ENCODE measurements at regions of chr11 and their contacts with region 1.

Region 1: GRCh38 chr11:64269380-64270234 is 14.9 kb downstream of the BAD start:
- DNase-seq: peak; percentile 89 to 98 (median 98)
- ATAC-seq: peak; percentile 82
- H3K4me3 ChIP-seq: peak overlapping the region; percentile 91
- H3K4me3 Mint-ChIP-seq: peak overlapping the region; percentile 95 to 100 (median 98)
- H3K27ac ChIP-seq: peak overlapping the region; percentile 95
- H3K27ac Mint-ChIP-seq: peak overlapping the region; percentile 94 to 99 (median 99)
- H3K4me1 ChIP-seq: peaks cover 8 to 10% of the 10 kb centered on the region in 2 donors
- H3K4me1 Mint-ChIP-seq: peaks cover 8 to 29% (median 24%) of the 10 kb centered on the region in 7 donors
- H3K27me3 ChIP-seq: no peaks in the 10 kb centered on the region
- H3K27me3 Mint-ChIP-seq: no peaks in the 10 kb centered on the region

Region 2: GRCh38 chr11:64185816-64186498 is 83.7 kb before region 1 on chr11 and contains the start of gene STIP1:
- CTCF ChIA-PET with region 1: no interaction called
- POLR2A ChIA-PET with region 1: interaction called, 7 read pairs
- intact Hi-C with region 1: loop called (anchors 1 kb)
- DNase-seq: peak; percentile 87 to 100 (median 99)
- ATAC-seq: peak; percentile 92
- H3K4me3 ChIP-seq: peak within 1 kb of the TSS; percentile 84
- H3K4me3 Mint-ChIP-seq: peak within 1 kb of the TSS in 9 of 10 donors; percentile 88 to 99 (median 96)
- H3K27ac ChIP-seq: peak within 1 kb of the TSS; percentile 82
- H3K27ac Mint-ChIP-seq: peak within 1 kb of the TSS in 7 of 9 donors; percentile 89 to 99 (median 92)
- H3K4me1 ChIP-seq: peaks cover 11 to 28% of the 10 kb centered on the region in 2 donors
- H3K4me1 Mint-ChIP-seq: peaks cover 19 to 58% (median 46%) of the 10 kb centered on the region in 7 donors
- H3K27me3 ChIP-seq: no peaks in the 10 kb centered on the region
- H3K27me3 Mint-ChIP-seq: peaks cover 0 to 6% (median 0%) of the 10 kb centered on the region in 5 donors
- total RNA-seq, gene STIP1: 45.1 to 243 (median 88.8) TPM

Region 3: DNA sequence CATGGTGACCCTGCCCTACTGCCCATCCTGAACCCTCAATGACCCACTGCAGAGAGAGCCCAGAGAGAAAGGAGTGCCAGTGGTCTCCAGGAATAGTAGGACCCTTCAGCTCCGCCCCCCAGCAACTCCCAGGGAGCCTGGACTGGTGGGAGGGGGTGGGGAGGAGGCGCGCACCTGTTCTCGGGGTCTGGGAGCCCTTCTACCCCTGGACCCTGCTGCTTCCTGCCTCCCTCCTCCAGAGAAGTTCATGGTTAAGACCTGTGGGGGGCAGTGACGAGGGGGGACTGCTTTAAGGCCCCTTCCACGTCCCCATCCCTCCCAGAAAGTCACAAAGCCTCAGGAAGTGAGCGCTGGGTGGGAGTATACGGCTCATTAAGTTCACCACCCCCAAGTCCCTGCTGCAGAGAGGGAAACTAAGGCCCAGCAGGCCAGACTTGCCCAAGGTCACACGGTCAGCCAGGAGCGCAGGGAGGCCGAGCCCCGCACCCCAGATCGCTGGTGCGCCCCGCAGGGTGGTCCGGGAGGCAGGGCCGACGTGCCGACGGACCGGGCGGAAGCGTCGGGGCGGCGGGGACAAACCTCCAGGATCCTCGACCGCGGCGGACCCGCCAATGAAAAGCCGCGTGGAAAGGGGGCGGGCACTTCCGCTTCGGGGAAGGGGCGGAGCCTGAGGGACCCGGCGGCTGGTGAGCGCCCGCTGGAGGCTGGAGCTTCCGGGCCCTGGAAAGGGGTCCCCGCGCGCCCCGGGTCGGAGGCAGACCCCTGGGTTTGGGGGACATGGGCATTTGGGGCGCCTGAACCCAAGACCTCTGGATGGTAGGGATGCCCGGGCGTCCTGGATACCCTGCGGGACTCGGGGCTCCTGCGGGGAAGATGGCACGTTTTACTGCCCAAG is 43.7 kb before region 1 on chr11 and contains the starts of genes NUDT22 and TRPT1:
- CTCF ChIA-PET with region 1: no interaction called
- POLR2A ChIA-PET with region 1: interaction called, 16 read pairs
- intact Hi-C with region 1: loop called (anchors 1 kb)
- DNase-seq: peak; percentile 81 to 97 (median 86)
- ATAC-seq: peak; percentile 82
- H3K4me3 ChIP-seq: peak within 1 kb of the TSS; percentile 60
- H3K4me3 Mint-ChIP-seq: peak within 1 kb of the TSS; percentile 87 to 96 (median 92)
- H3K27ac ChIP-seq: peak within 1 kb of the TSS; percentile 89
- H3K27ac Mint-ChIP-seq: peak within 1 kb of the TSS; percentile 76 to 97 (median 90)
- H3K4me1 ChIP-seq: peaks cover 28 to 34% of the 10 kb centered on the region in 2 donors
- H3K4me1 Mint-ChIP-seq: peaks cover 15 to 46% (median 34%) of the 10 kb centered on the region in 7 donors
- H3K27me3 ChIP-seq: no peaks in the 10 kb centered on the region
- H3K27me3 Mint-ChIP-seq: no peaks in the 10 kb centered on the region
- total RNA-seq, gene NUDT22: 47.8 to 94.0 (median 78.3) TPM
- total RNA-seq, gene TRPT1: 24.0 to 53.0 (median 27.2) TPM

Region 4: GRCh38 chr11:64240394-64241174 is 29.0 kb before region 1 on chr11 and contains the start of gene FKBP2:
- CTCF ChIA-PET with region 1: interaction called, 4 read pairs
- POLR2A ChIA-PET with region 1: interaction called, 154 read pairs
- intact Hi-C with region 1: loop called (anchors 1 to 2 kb)
- DNase-seq: peak; percentile 97 to 99 (median 98)
- ATAC-seq: peak; percentile 78
- H3K4me3 ChIP-seq: peak within 1 kb of the TSS; percentile 73
- H3K4me3 Mint-ChIP-seq: peak within 1 kb of the TSS; percentile 80 to 95 (median 89)
- H3K27ac ChIP-seq: peak within 1 kb of the TSS; percentile 99
- H3K27ac Mint-ChIP-seq: peak within 1 kb of the TSS; percentile 97 to 100 (median 99)
- H3K4me1 ChIP-seq: peaks cover 24 to 28% of the 10 kb centered on the region in 2 donors
- H3K4me1 Mint-ChIP-seq: peaks cover 9 to 46% (median 31%) of the 10 kb centered on the region in 7 donors
- H3K27me3 ChIP-seq: no peaks in the 10 kb centered on the region
- H3K27me3 Mint-ChIP-seq: no peaks in the 10 kb centered on the region
- total RNA-seq, gene FKBP2: 20.3 to 46.6 (median 33.5) TPM

Region 5: DNA sequence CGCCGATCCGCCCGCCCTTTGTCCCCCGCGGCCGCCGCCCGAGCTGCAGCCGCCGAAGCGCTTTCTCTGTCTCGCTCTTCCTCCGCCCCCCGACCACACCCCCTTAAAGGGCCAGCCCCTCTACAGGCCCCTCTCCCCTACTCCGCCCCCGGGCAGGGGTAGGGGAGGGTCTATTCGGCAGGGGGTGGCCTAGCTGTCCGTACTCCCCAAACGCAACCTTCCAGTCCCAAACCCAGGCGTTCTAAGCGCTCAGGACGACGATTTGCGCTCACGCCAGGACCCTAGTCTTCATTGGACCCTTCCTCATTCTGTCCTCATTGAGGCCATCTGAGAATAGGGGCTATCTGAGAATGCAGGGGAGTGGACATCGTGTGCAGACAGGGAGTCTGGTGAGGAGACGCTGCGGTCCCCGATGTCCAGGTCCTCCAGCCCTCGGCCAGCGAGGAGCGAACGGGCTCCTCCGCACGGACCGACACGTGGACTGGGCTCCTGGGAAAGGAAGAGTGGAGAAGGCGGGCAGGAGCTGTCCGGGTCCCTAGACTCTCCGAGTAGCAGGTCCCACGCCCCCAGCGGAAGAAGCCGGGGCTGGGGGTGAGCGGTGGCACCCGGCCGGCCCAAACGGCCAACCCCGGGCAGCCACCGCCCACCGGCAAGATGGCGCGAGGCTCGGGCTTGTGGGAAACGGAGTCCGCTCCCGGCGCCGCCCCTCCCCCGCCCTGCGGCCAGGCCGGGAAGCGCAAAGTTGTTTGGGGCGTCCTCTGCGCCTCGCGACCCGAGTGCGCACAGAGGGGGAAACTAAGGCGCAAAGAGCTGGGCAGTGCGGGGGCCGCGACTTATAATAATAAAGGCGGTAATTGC is 22.5 kb before region 1 on chr11 and contains the start of gene PPP1R14B:
- CTCF ChIA-PET with region 1: interaction called, 8 read pairs
- POLR2A ChIA-PET with region 1: interaction called, 154 read pairs
- intact Hi-C with region 1: loop called (anchors 1 kb)
- DNase-seq: peak; percentile 55 to 88 (median 70)
- ATAC-seq: peak; percentile 75
- H3K4me3 ChIP-seq: peak within 1 kb of the TSS; percentile 100
- H3K4me3 Mint-ChIP-seq: peak within 1 kb of the TSS; percentile 83 to 93 (median 88)
- H3K27ac ChIP-seq: peak within 1 kb of the TSS; percentile 64
- H3K27ac Mint-ChIP-seq: peak within 1 kb of the TSS; percentile 65 to 88 (median 85)
- H3K4me1 ChIP-seq: peaks cover 25 to 27% of the 10 kb centered on the region in 2 donors
- H3K4me1 Mint-ChIP-seq: peaks cover 7 to 46% (median 32%) of the 10 kb centered on the region in 7 donors
- H3K27me3 ChIP-seq: no peaks in the 10 kb centered on the region
- H3K27me3 Mint-ChIP-seq: peaks cover 0 to 3% (median 0%) of the 10 kb centered on the region in 5 donors
- total RNA-seq, gene PPP1R14B: 20.1 to 116 (median 26.0) TPM

Region 6: DNA sequence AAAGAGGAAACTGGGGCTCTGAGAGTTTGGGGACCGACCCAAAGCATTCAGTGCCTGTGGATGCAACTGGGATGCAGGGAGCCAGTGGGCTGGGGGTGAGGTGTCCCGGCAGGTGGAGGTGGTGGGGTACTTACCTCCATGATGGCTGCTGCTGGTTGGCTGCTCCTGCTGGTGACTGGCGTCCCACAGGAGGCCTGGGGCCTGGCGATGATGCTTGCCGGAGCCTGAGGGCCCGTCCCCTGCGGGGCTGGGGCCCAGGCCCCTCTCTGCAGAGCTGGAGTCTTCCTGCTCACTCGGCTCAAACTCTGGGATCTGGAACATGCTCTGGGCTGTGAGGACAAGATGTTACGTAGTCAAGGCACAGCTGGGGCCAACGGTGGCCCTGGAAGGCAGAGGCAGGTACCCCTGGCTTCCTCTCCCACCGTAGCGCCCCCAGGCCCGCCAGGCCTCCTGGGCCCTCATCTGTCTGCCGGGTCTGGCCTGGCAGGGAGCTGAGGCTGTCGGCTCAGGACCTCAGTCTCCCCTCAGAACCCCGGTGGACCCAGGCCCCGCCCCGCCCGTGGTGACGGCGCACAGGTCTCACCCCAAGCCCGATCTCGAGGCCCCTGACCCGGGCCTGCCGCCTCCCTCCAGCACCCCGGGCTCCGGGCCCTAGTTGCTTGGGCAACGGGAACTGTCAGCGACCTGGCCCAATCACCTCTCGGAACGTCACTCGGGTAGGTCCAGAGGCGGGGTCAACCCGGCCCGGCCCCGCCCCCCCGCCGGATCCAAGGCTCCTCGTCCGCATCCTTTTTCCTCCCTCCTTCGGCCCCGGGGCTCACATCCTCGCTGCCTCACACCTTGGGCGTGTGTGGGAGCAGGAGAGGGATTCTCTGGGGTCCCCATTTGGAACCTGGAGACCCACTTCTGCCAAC is 14.7 kb after region 1 on chr11 and contains the start of gene BAD:
- CTCF ChIA-PET with region 1: interaction called, 15 read pairs
- POLR2A ChIA-PET with region 1: interaction called, 104 read pairs
- intact Hi-C with region 1: loop called (anchors 1 kb)
- DNase-seq: peak; percentile 77 to 92 (median 87)
- ATAC-seq: peak; percentile 87
- H3K4me3 ChIP-seq: peak within 1 kb of the TSS; percentile 100
- H3K4me3 Mint-ChIP-seq: peak within 1 kb of the TSS; percentile 84 to 93 (median 89)
- H3K27ac ChIP-seq: peak within 1 kb of the TSS; percentile 99
- H3K27ac Mint-ChIP-seq: peak within 1 kb of the TSS; percentile 81 to 98 (median 95)
- H3K4me1 ChIP-seq: peaks cover 11 to 17% of the 10 kb centered on the region in 2 donors
- H3K4me1 Mint-ChIP-seq: peaks cover 8 to 25% (median 18%) of the 10 kb centered on the region in 7 donors
- H3K27me3 ChIP-seq: no peaks in the 10 kb centered on the region
- H3K27me3 Mint-ChIP-seq: no peaks in the 10 kb centered on the region
- total RNA-seq, gene BAD: 17.5 to 41.1 (median 22.7) TPM

Region 7: DNA sequence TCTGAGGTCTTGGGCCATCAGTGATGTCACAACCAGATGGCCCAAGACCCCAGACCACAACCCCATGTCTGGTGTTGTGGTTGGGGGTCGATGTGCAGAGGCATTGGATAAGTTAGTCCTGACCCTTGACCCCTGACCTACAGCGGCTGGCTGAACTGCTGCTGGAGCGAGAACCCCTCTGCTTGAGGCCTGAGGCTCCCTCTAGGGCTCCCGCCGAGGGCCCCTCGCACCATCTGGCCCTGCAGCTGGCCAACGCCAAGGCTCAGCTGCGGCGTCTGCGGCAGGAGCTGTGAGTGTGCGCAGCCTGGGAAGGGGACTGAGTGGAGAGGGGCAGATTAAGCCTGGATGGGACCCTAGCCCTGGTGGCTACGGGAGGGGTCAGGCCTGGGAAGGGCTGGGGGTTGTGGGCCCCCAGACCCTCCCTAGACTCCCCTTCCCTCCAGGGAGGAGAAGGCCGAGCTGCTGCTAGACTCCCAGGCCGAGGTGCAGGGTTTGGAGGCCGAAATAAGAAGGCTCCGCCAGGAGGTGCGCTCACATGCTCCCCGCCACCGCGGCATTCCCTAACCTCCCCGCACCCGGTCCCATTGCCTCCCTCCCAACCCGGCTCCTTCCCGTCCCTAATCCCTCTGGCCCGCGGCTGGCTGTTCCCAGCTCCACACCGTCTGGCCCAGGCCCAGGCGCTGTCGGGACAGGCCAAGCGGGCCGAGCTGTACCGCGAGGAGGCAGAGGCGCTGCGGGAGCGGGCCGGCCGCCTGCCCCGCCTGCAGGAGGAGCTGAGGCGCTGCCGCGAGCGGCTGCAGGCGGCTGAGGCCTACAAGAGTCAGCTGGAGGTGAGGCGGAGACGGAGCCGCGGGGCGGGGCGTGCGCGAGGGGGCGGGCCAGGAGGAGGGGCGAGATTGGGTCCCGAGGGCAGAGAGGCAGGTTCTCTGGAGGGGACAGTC is 72.5 kb after region 1 on chr11:
- CTCF ChIA-PET with region 1: no interaction called
- POLR2A ChIA-PET with region 1: interaction called, 3 read pairs
- intact Hi-C with region 1: loop called (anchors 1 to 2 kb)
- DNase-seq: peak; percentile 82 to 96 (median 88)
- ATAC-seq: peak; percentile 80
- H3K4me3 ChIP-seq: no peak overlapping the region
- H3K4me3 Mint-ChIP-seq: peak overlapping the region in 9 of 10 donors; percentile 9 to 91 (median 76)
- H3K27ac ChIP-seq: peak overlapping the region; percentile 40
- H3K27ac Mint-ChIP-seq: peak overlapping the region in 3 of 9 donors; percentile 25 to 75 (median 42)
- H3K4me1 ChIP-seq: peaks cover 29 to 30% of the 10 kb centered on the region in 2 donors
- H3K4me1 Mint-ChIP-seq: peaks cover 23 to 49% (median 30%) of the 10 kb centered on the region in 7 donors
- H3K27me3 ChIP-seq: no peaks in the 10 kb centered on the region
- H3K27me3 Mint-ChIP-seq: peaks cover 0 to 2% (median 0%) of the 10 kb centered on the region in 5 donors

Measured in naive thymus-derived CD4-positive, alpha-beta T cell (primary cell).